A549 (cell line): ENCODE measurements at regions of chr17 and their contacts with region 1.

Region 1: GRCh38 chr17:42760652-42761581 is at the start of gene RAMP2:
- DNase-seq: peak in 1 of 2 experiments; percentile 41
- ATAC-seq: peak; percentile 53 to 65; a peak in 4 of 6 replicates
- H3K4me3 ChIP-seq: peak within 1 kb of the TSS; percentile 56
- H3K27ac ChIP-seq: peak within 1 kb of the TSS; percentile 75 to 82
- H3K4me1 ChIP-seq: peaks cover 15% of the 10 kb centered on the region
- CTCF ChIP-seq: no peak
- EP300 ChIP-seq: no peak
- POLR2A ChIP-seq: no peak
- RAD21 ChIP-seq: no peak
- polyA plus RNA-seq, gene RAMP2: 0.49 and 1.2 TPM in 2 replicates

Region 2: GRCh38 chr17:42586514-42587230 is 174.2 kb before region 1 on chr17:
- CTCF ChIA-PET with region 1: interaction called, 23 read pairs
- POLR2A ChIA-PET with region 1: no interaction called
- DNase-seq: no peak
- ATAC-seq: no peak
- H3K4me3 ChIP-seq: no peak overlapping the region
- H3K27ac ChIP-seq: no peak overlapping the region
- H3K4me1 ChIP-seq: no peaks in the 10 kb centered on the region
- CTCF ChIP-seq: no peak
- EP300 ChIP-seq: no peak
- POLR2A ChIP-seq: no peak
- RAD21 ChIP-seq: no peak

Region 3: DNA sequence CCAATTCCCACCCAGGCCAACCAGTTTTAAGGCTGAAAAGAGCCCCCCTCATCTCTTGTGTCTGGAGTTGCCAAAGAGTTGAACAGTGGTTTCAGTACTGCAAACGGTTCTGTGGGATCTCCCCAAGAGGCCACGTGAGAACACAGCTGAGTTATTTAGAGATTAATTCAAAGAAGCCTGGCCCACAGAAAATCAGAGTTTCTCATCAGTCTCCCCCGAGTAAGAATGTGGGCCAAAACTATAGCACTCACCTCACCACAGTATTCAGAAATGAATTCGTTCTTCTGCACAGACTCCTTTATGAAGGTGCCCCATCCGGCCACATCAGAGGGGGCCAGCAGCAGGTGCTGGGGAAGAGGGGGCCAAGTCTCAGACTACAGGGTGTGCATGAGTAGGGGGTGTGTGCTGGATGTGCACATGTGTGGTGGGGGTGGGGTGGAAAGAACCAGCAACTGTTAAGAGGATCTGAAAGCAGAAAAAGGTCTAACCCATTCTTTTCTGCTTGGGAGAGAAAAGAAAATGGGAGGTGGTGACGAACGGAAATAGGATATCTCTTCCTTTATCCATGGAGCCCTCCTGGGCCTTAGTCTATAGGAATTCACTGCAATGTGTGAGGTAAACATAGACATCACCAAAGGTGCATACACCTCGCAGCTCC is 56.0 kb before region 1 on chr17:
- CTCF ChIA-PET with region 1: interaction called, 17 read pairs
- POLR2A ChIA-PET with region 1: no interaction called
- DNase-seq: no peak
- ATAC-seq: no peak
- H3K4me3 ChIP-seq: no peak overlapping the region
- H3K27ac ChIP-seq: no peak overlapping the region
- H3K4me1 ChIP-seq: no peaks in the 10 kb centered on the region
- CTCF ChIP-seq: no peak
- EP300 ChIP-seq: no peak
- POLR2A ChIP-seq: no peak
- RAD21 ChIP-seq: no peak

Region 4: DNA sequence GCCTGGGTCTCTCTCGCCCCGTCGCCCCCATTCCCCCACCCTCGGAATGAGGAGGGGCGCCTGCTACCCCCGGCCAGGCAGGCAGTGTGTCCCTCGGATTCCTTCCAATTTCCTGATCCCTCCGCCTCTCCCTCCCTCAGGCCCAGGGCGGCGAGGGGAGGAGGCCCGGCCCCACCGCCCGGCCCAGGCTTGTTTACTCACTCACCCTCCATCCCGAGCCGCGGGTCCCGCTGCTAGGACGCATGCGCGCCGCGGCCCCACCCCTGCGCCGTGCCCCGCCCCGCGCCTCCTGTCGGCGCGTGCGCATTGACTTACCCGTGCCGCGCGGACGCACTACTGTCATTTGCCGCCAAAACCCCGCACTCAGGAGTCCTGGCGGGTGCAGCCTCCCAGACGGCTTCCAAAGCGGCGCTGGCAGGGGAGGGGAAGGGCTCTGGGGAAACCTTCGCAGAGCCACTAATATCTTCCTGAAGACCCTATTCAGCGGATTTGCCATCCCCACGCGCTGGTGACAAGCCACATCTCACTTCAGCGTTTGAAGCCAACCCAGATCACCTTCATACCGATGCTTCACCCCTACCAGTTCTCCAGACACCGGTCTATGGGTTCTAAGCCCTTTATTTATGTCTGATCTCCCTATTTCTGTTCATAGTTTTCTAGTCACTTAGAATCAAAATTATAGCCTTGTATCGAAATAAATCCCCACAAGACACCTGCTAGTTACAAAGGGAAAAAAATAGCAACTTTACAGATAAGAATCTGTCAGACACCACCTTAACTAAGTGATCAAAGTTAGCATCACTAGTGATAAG is 15.9 kb before region 1 on chr17 and contains the start of gene EZH1:
- CTCF ChIA-PET with region 1: interaction called, 114 read pairs
- POLR2A ChIA-PET with region 1: interaction called, 3 read pairs
- DNase-seq: peak; percentile 96 to 100
- ATAC-seq: peak; percentile 89 to 95
- H3K4me3 ChIP-seq: peak within 1 kb of the TSS; percentile 55
- H3K27ac ChIP-seq: peak within 1 kb of the TSS; percentile 79 to 91
- H3K4me1 ChIP-seq: peaks cover 9% of the 10 kb centered on the region; the same call in 2 of the 3 replicates
- CTCF ChIP-seq: no peak
- EP300 ChIP-seq: no peak
- POLR2A ChIP-seq: peak; percentile 63
- RAD21 ChIP-seq: no peak
- polyA plus RNA-seq, gene EZH1: 35.4 and 41.1 TPM in 2 replicates

Region 5: DNA sequence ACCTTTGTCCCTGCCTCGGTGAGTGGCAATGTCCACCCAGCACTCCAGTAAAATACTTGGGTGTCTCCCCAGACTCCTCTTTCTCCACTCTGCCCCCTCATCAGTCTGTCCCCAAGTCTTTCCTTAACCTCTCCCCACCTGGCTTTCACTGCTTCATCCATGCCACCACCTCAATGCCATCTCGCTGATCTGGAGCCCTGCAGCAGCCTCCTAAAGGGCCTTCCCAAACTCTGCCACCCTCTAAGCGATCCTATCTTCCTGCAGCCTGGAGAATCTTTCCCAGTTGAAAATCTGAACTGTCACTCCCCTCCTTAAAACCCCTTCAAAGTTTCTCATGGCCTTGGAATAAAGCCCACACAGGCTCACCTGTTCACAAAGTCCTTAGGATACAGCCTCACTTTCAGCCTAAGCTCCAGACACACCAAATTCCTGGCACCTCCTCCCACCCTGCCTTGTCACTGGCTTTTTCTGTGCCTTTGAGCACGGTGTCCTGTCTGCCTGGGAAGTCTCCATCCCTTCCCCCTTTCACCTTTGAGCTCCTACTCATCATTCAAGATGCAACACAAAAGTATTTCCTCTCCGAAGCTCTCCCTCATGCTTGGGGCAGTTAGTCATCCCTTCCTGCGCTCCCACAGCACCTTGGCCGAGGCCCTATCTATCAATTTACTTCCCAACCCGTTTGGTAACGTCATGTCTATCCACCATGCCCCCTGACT is 22.3 kb after region 1 on chr17:
- CTCF ChIA-PET with region 1: interaction called, 15 read pairs
- POLR2A ChIA-PET with region 1: no interaction called
- DNase-seq: peak; percentile 45 to 67
- ATAC-seq: peak; percentile 41 to 61; a peak in 5 of 6 replicates
- H3K4me3 ChIP-seq: no peak overlapping the region
- H3K27ac ChIP-seq: peak overlapping the region; percentile 63 to 75
- H3K4me1 ChIP-seq: peaks cover 30% of the 10 kb centered on the region
- CTCF ChIP-seq: no peak
- EP300 ChIP-seq: no peak
- POLR2A ChIP-seq: no peak
- RAD21 ChIP-seq: no peak

Region 6: DNA sequence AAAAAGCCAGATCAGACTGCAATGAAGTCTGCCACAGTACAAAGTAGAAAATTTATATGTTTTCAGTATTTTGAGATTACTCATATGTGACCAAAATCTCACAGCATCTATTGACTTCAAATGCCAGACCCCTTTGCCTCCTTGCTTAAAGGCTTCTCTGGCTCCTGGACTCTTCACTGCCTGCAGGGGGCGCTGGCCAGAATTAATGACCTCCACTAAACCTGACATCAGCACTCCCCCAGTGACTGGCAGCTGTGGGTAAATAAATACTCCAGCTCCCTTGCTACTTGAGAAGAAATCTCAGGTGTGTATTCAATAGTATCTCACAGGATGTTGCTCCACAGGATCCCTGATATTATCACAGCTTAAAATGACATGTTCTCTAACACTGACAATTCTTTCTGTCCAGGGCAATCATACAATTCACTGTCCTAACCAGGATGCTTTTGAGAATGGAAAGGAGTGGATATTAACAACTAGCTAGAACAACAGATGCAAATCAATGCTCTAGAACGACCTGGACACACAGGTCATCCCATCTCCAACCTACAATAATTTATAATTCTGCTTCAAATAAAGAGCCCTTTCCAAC is 59.1 kb after region 1 on chr17:
- CTCF ChIA-PET with region 1: interaction called, 14 read pairs
- POLR2A ChIA-PET with region 1: interaction called, 6 read pairs
- DNase-seq: peak; percentile 84 to 85
- ATAC-seq: peak; percentile 44 to 66; a peak in 3 of 6 replicates
- H3K4me3 ChIP-seq: no peak overlapping the region
- H3K27ac ChIP-seq: no peak overlapping the region
- H3K4me1 ChIP-seq: peaks cover 21% of the 10 kb centered on the region
- CTCF ChIP-seq: peak; percentile 82
- EP300 ChIP-seq: no peak
- POLR2A ChIP-seq: no peak
- RAD21 ChIP-seq: peak; percentile 26 to 40; a peak in 2 of 5 replicates

Region 7: DNA sequence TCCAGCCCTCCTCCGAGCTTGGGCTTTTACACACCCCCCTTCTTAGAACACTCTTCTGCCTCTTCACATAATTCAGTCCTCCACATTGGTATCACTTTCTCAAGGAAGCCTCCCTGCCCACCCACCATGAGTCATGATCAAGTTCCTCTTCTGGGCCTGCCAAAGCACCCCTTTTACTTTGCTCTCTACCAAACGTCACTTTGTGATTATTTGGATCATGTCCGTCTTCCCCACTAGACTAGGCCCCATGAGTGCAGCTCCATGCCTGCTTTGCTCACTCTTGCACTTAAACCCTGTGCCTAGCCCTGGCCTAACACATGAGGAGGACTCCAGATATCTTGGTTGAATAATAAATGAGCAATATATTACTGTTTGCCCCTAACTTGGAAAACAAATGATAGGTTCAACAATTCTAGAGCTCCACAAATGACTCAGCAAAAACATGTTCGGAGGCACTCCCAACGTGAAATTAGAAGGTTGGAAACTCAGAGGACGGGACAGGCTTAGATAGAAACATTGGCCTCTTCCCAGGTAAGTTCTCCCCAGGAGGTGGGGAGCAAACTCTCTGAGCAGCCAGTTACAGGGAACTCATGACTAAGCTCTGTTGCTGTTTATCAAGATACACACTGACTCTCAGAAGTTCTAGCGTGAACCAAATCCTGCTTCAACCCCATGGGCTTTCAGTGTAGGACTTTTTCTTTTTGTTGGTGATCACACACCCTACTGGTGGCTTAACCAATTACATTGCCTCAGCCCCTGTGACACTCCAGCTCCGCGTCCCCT is 168.0 kb after region 1 on chr17:
- CTCF ChIA-PET with region 1: no interaction called
- POLR2A ChIA-PET with region 1: no interaction called
- DNase-seq: peak; percentile 93 to 95
- ATAC-seq: peak; percentile 96 to 97
- H3K4me3 ChIP-seq: no peak overlapping the region
- H3K27ac ChIP-seq: peak overlapping the region; percentile 75 to 84
- H3K4me1 ChIP-seq: peaks cover 9% of the 10 kb centered on the region
- CTCF ChIP-seq: peak; percentile 74
- EP300 ChIP-seq: no peak
- POLR2A ChIP-seq: no peak
- RAD21 ChIP-seq: peak; percentile 82 to 84

Region 8: DNA sequence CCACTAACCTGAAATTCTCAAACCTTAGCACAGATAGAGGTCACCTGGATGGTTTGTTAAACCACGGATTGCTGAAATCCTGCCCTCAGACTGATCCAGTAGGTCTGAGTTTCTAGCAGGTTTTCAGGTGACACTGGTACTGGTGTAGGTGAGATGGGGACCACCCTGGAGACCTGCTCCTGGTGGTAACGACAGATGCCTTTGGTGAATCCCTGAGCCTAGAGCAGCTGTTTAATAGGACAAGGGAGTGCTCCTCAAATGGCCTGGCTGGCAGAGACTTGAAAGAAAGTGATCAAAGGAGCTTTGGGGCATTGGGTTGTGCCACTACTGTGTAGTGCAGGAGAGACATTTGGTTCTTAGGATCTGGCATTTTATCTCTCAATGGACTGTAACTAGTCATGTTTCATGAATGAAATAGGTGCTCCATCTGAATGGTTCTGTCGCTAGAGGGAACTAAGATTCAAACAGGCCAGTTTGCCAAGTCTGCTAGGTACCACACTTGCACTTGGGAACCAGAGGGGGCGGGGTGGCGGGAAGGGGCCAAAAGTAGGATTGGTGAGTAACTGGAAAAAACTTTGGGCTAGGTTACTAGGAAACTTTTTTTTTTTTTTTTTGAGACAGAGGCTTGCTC is 242.7 kb after region 1 on chr17:
- CTCF ChIA-PET with region 1: no interaction called
- POLR2A ChIA-PET with region 1: no interaction called
- DNase-seq: peak in 1 of 2 experiments; percentile 80
- ATAC-seq: peak; percentile 47 to 68
- H3K4me3 ChIP-seq: no peak overlapping the region
- H3K27ac ChIP-seq: 0 out of 6 replicates have a peak overlapping the region, but pooled peaks of 1 of the 2 experiments have one; percentile 5
- H3K4me1 ChIP-seq: peaks cover 50% of the 10 kb centered on the region
- CTCF ChIP-seq: no peak; the same call in 2 of the 3 replicates
- EP300 ChIP-seq: no peak
- POLR2A ChIP-seq: no peak
- RAD21 ChIP-seq: no peak